Testis (tissue), 5 donors: ENCODE measurements at regions of chr18 and their contacts with region 1.

Region 1: GRCh38 chr18:46657115-46657955 is at the start of gene LOXHD1:
- DNase-seq: no peak
- H3K4me3 ChIP-seq: peak within 1 kb of the TSS in 1 of 2 donors; percentile 15
- H3K27ac ChIP-seq: no peak within 1 kb of the TSS
- H3K4me1 ChIP-seq: no peaks in the 10 kb centered on the region
- H3K27me3 ChIP-seq: no peaks in the 10 kb centered on the region
- CTCF ChIP-seq: no peak
- POLR2A ChIP-seq: no peak
- total RNA-seq, gene LOXHD1: 11.3 to 29.6 TPM

Region 2: DNA sequence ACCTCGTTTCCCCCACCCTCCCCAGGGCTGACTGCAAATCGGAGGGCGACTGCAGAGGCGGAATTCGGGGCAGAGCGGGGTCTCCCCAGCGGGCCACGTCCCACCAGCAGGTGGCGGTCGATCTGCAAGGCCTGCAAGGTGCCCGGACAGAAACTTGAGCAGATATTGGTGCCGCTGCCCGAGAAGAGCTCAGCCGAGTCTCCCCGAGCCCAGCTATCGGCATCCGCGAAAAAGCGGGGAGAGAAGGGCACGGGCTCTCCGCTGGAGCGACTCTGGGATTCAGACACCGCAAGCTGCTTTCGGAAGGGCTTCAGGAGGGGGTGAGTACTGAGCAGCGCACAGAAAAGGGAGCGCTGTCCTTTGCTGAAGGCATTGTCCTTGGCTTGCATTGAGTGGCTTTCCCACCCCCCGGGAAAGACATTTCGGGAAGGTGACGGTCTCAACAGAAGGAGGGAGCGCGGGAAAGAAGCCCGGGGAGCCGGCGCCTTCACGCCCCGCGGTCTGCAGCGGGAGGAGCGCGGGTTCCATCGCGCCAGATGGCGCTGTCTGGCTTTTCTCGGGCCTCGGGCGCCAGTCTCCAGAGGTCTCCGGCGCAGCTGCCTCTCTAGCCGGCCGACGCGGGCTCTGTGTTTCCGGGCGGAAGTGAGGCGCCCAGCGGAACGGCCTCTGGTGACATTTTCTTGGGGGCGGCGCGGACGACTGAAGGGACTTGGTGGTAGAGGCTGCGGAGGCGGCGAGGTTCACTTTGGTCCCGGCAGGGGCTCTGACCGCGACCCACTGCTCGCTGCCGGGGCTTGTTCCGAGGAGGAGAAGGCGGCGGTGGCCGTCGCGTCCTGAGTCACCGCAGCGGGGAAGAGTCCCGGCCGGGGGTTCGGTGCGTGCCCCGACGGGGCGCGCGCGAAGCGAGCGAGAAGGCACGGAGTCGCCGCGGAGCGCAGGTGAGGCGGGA is 483.7 kb before region 1 on chr18:
- intact Hi-C with region 1: loop called (anchors 10 kb)
- DNase-seq: peak; percentile 96
- H3K4me3 ChIP-seq: peak overlapping the region; percentile 78 to 99
- H3K27ac ChIP-seq: peak overlapping the region; percentile 75 to 92
- H3K4me1 ChIP-seq: no peaks in the 10 kb centered on the region
- H3K27me3 ChIP-seq: no peaks in the 10 kb centered on the region
- CTCF ChIP-seq: peak; percentile 81 to 87 (median 82)
- POLR2A ChIP-seq: no peak

Region 3: DNA sequence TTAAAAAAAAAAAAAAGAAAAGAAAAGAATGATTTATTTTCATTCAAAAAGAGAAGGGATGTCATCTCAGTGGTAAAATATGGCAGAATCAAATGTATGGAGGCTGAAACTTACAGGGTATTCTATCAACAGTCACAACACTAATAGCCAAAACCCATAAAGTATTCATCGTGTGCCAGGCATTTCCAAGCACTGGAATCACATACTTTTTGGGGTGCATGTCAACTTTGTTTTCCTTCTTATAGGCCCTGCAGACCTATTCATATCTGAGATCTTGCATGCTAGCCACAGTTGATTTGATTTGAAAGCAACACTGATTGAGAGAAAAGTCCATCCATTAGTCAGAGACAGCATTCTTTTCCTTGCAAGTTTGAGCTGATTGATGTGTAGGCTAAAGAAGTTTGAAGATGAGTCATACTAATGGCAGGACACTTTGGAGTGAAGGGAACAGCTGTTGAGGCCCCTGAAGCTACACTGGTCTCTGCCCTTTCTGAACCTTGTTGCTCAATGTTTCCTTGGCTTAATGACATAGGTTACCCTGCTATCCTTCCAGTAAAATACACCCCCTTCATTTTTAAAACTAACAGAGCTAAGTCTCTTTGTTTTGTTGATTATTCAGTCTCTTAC is 282.1 kb after region 1 on chr18:
- intact Hi-C with region 1: no loop called
- DNase-seq: no peak
- H3K4me3 ChIP-seq: no peak overlapping the region
- H3K27ac ChIP-seq: no peak overlapping the region
- H3K4me1 ChIP-seq: no peaks in the 10 kb centered on the region
- H3K27me3 ChIP-seq: no peaks in the 10 kb centered on the region
- CTCF ChIP-seq: no peak
- POLR2A ChIP-seq: no peak

Region 4: GRCh38 chr18:47226660-47227059 is 569.3 kb after region 1 on chr18:
- intact Hi-C with region 1: no loop called
- DNase-seq: no peak
- H3K4me3 ChIP-seq: no peak overlapping the region
- H3K27ac ChIP-seq: no peak overlapping the region
- H3K4me1 ChIP-seq: no peaks in the 10 kb centered on the region
- H3K27me3 ChIP-seq: no peaks in the 10 kb centered on the region
- CTCF ChIP-seq: no peak
- POLR2A ChIP-seq: no peak